Left cardiac atrium (tissue), 4 donors: ENCODE measurements at regions of chr3 and their contacts with region 1.

Region 1: GRCh38 chr3:120245386-120245785 is 39.6 kb downstream of the GPR156 start:
- DNase-seq: no peak
- ATAC-seq: no peak

Region 2: GRCh38 chr3:120344349-120344748 is 99.0 kb after region 1 on chr3:
- intact Hi-C with region 1: no loop called
- DNase-seq: no peak
- ATAC-seq: no peak

Region 3: GRCh38 chr3:120795017-120795648 is 549.7 kb after region 1 on chr3:
- intact Hi-C with region 1: loop called (anchors 5 to 10 kb)
- DNase-seq: peak; percentile 84
- ATAC-seq: peak; percentile 89 to 90

Region 4: GRCh38 chr3:121529308-121529707 is 1283.9 kb after region 1 on chr3:
- intact Hi-C with region 1: no loop called
- DNase-seq: no peak
- ATAC-seq: no peak